ENCODE measurements at regions of chr15 and their contacts with region 1.

Region 1: GRCh38 chr15:59255647-59256380 is 49.2 kb downstream of the LDHAL6B start:
- DNase-seq: peak; percentile 86 to 90
- H3K4me3 ChIP-seq: no peak overlapping the region
- H3K4me3 Mint-ChIP-seq: peak overlapping the region; percentile 61
- H3K27ac Mint-ChIP-seq: peak overlapping the region; percentile 95
- H3K4me1 ChIP-seq: peaks cover 52% of the 10 kb centered on the region
- H3K4me1 Mint-ChIP-seq: peaks cover 42% of the 10 kb centered on the region
- H3K27me3 ChIP-seq: no peaks in the 10 kb centered on the region
- H3K27me3 Mint-ChIP-seq: no peaks in the 10 kb centered on the region
- CTCF ChIP-seq: no peak

Region 2: DNA sequence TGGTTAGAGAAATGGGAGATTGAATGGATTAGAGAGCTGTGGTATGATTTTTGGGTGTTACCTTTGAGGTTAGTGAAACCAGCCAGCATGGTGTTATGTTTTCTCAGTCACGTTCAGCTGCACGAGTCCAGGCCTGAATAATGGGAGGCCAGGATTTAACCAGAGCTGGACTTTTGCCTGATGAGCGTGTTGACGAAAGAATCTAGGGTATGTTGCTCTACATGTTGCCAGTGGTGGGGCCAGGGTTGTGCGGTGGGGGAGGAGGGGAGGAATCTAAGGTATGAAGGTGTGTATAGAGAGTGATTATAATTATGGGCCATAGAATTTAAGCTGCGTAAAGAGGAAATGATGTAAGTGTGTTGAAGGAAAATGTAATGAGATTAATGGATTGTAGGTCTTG is 462.0 kb before region 1 on chr15:
- CTCF ChIA-PET with region 1: no interaction called
- POLR2A ChIA-PET with region 1: no interaction called
- intact Hi-C with region 1: no loop called
- DNase-seq: peak; percentile 91 to 97
- H3K4me3 ChIP-seq: no peak overlapping the region
- H3K4me3 Mint-ChIP-seq: peak overlapping the region; percentile 61
- H3K27ac Mint-ChIP-seq: peak overlapping the region; percentile 99
- H3K4me1 ChIP-seq: peaks cover 31% of the 10 kb centered on the region
- H3K4me1 Mint-ChIP-seq: peaks cover 41% of the 10 kb centered on the region
- H3K27me3 ChIP-seq: no peaks in the 10 kb centered on the region
- H3K27me3 Mint-ChIP-seq: no peaks in the 10 kb centered on the region
- CTCF ChIP-seq: no peak

Region 3: DNA sequence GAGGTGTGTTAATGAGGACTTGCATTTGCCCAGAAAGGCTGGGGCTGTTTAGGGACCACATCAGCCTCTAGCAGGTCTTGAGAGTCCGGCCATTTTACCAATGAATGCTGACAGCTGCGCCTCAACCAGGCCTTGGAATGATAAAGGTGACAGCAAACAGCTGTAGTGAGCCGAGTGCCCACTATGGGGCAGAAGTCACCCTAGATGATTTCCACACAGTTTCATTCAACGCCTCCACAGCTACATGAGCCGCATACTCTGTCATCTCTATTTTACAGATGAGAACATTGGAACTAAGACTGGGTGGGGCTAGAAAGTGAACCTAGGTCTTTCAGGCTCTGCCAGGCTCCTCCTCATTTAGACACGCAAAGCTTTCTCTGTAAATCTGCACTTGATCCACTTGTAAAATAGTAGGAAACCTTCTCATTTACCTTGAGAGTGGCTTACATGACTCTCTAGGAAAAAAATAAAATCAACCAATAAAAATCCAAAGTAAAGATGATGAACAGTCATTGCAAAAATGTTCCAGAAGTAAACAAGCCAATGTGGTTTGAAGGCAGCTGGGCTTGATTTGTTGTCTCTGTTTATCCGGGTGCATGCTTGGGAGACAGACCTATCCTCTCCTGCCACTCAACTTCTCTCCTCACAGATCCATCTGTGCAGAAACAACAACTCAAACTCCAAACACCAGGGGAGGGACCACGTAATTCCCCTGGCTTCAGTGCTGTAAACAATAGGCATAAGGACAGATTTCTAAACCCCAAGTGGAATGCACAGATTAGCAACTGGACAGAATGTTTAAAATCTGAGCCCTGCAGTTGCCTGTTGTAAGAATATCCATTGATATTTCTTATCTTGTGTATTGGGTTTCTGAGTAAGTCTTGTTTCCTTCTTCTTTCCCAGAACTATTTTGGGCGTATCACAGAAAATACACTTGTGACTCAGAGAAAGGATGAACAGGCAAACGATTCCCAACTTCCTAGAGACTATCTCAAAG is 80.7 kb before region 1 on chr15:
- CTCF ChIA-PET with region 1: no interaction called
- POLR2A ChIA-PET with region 1: no interaction called
- intact Hi-C with region 1: no loop called
- DNase-seq: peak; percentile 47 to 61
- H3K4me3 ChIP-seq: no peak overlapping the region
- H3K4me3 Mint-ChIP-seq: no peak overlapping the region
- H3K27ac Mint-ChIP-seq: peak overlapping the region; percentile 59
- H3K4me1 ChIP-seq: no peaks in the 10 kb centered on the region
- H3K4me1 Mint-ChIP-seq: no peaks in the 10 kb centered on the region
- H3K27me3 ChIP-seq: no peaks in the 10 kb centered on the region
- H3K27me3 Mint-ChIP-seq: no peaks in the 10 kb centered on the region
- CTCF ChIP-seq: peak; percentile 53 to 56

Region 4: DNA sequence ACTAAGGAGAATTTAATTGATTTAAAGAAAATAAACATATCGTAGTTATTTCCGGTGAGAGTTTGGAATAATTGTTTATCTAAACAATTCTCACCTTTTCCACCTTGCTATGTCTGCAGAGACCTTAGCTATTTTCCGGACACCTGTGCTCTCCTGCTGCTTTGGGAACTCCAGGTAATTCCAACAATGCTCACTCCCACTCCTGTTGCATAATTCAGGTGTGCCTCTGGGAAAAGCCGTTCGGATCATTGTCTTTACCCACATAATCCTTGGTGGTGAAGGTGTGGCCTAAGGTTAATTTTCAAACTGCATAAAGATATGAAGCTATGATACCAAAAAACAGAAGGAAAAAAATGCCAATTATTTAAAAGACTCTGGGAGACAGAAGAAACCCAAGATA is 10.2 kb after region 1 on chr15:
- CTCF ChIA-PET with region 1: no interaction called
- POLR2A ChIA-PET with region 1: no interaction called
- intact Hi-C with region 1: loop called (anchors 1 kb)
- DNase-seq: peak; percentile 71 to 79
- H3K4me3 ChIP-seq: no peak overlapping the region
- H3K4me3 Mint-ChIP-seq: peak overlapping the region; percentile 57
- H3K27ac Mint-ChIP-seq: peak overlapping the region; percentile 53
- H3K4me1 ChIP-seq: peaks cover 50% of the 10 kb centered on the region
- H3K4me1 Mint-ChIP-seq: peaks cover 13% of the 10 kb centered on the region
- H3K27me3 ChIP-seq: no peaks in the 10 kb centered on the region
- H3K27me3 Mint-ChIP-seq: no peaks in the 10 kb centered on the region
- CTCF ChIP-seq: no peak

Region 5: DNA sequence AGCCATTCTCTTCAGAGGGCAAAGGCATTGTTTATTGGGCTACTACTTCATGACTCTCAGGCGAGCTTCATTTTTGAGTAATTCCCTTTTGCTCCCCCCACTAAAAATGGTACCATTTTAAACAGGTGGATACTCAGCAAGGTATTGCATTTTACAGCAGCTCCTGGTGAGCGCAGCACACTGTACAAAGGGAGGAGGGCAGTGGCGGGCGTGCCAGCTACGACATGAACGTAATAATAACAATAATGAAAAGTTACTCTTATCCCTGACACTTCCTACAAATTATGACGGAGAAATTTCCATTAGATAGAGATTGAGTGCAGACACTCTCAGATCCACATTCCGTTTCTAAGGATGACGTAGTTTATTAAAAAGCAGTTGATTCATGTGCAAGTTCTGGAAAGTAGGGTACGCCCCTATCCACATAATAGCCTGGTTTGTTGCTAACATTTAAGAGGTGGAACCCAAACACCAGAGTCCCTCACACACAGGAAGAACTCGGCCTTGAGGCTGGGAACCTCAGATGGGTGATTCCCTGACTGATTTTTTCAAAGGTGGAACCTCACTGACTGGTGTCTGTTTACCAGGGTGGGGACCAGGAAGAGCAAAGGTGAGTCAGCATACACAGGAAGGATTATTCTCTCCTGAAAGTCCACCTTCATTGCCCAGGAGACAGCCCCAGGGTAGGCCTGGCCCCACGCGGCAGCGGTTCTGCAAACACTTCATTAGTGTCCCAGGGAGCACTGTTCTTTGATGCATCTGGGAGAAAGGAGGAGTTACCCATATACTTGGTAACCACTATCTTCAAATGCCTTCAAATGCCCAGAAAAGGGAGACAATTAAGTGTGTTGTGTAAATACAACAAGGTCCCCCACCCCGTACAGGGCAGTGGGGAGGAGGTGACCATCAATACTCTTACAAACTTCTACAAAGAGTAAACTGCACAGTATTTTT is 20.7 kb after region 1 on chr15:
- CTCF ChIA-PET with region 1: no interaction called
- POLR2A ChIA-PET with region 1: no interaction called
- intact Hi-C with region 1: loop called (anchors 1 kb)
- DNase-seq: peak; percentile 81 to 91
- H3K4me3 ChIP-seq: no peak overlapping the region
- H3K4me3 Mint-ChIP-seq: peak overlapping the region; percentile 58
- H3K27ac Mint-ChIP-seq: peak overlapping the region; percentile 87
- H3K4me1 ChIP-seq: peaks cover 62% of the 10 kb centered on the region
- H3K4me1 Mint-ChIP-seq: peaks cover 47% of the 10 kb centered on the region
- H3K27me3 ChIP-seq: no peaks in the 10 kb centered on the region
- H3K27me3 Mint-ChIP-seq: no peaks in the 10 kb centered on the region
- CTCF ChIP-seq: no peak

Region 6: GRCh38 chr15:59313641-59314332 is 58.0 kb after region 1 on chr15:
- CTCF ChIA-PET with region 1: no interaction called
- POLR2A ChIA-PET with region 1: no interaction called
- intact Hi-C with region 1: no loop called
- DNase-seq: no peak
- H3K4me3 ChIP-seq: no peak overlapping the region
- H3K4me3 Mint-ChIP-seq: no peak overlapping the region
- H3K27ac Mint-ChIP-seq: no peak overlapping the region
- H3K4me1 ChIP-seq: peaks cover 11% of the 10 kb centered on the region
- H3K4me1 Mint-ChIP-seq: peaks cover 33% of the 10 kb centered on the region
- H3K27me3 ChIP-seq: no peaks in the 10 kb centered on the region
- H3K27me3 Mint-ChIP-seq: no peaks in the 10 kb centered on the region
- CTCF ChIP-seq: no peak

Region 7: GRCh38 chr15:59339252-59339672 is 83.4 kb after region 1 on chr15:
- CTCF ChIA-PET with region 1: no interaction called
- POLR2A ChIA-PET with region 1: no interaction called
- intact Hi-C with region 1: loop called (anchors 5 kb)
- DNase-seq: peak in 1 of 2 experiments; percentile 14
- H3K4me3 ChIP-seq: no peak overlapping the region
- H3K4me3 Mint-ChIP-seq: no peak overlapping the region
- H3K27ac Mint-ChIP-seq: no peak overlapping the region
- H3K4me1 ChIP-seq: peaks cover 3% of the 10 kb centered on the region; the same call in 1 of the 2 replicates
- H3K4me1 Mint-ChIP-seq: peaks cover 22% of the 10 kb centered on the region
- H3K27me3 ChIP-seq: no peaks in the 10 kb centered on the region
- H3K27me3 Mint-ChIP-seq: no peaks in the 10 kb centered on the region
- CTCF ChIP-seq: no peak

Region 8: GRCh38 chr15:59372352-59373211 is 116.8 kb after region 1 on chr15 and contains the start of gene MYO1E:
- CTCF ChIA-PET with region 1: no interaction called
- POLR2A ChIA-PET with region 1: interaction called, 12 read pairs
- intact Hi-C with region 1: loop called (anchors 2 kb)
- DNase-seq: peak; percentile 96 to 97
- H3K4me3 ChIP-seq: peak within 1 kb of the TSS; percentile 96
- H3K4me3 Mint-ChIP-seq: peak within 1 kb of the TSS; percentile 98
- H3K27ac Mint-ChIP-seq: peak within 1 kb of the TSS; percentile 97
- H3K4me1 ChIP-seq: peaks cover 31% of the 10 kb centered on the region
- H3K4me1 Mint-ChIP-seq: peaks cover 10% of the 10 kb centered on the region
- H3K27me3 ChIP-seq: no peaks in the 10 kb centered on the region
- H3K27me3 Mint-ChIP-seq: no peaks in the 10 kb centered on the region
- CTCF ChIP-seq: no peak
- total RNA-seq, gene MYO1E: 182 and 187 TPM in 2 replicates